HEK293 (cell line): ENCODE measurements at regions of chr17 and their contacts with region 1.

Region 1: GRCh38 chr17:45277216-45277849 is 15.4 kb upstream of the SPATA32 start:
- H3K4me3 ChIP-seq: no peak overlapping the region
- H3K27ac ChIP-seq: no peak overlapping the region
- H3K4me1 ChIP-seq: peaks cover 5% of the 10 kb centered on the region
- CTCF ChIP-seq: peak; percentile 55

Region 2: DNA sequence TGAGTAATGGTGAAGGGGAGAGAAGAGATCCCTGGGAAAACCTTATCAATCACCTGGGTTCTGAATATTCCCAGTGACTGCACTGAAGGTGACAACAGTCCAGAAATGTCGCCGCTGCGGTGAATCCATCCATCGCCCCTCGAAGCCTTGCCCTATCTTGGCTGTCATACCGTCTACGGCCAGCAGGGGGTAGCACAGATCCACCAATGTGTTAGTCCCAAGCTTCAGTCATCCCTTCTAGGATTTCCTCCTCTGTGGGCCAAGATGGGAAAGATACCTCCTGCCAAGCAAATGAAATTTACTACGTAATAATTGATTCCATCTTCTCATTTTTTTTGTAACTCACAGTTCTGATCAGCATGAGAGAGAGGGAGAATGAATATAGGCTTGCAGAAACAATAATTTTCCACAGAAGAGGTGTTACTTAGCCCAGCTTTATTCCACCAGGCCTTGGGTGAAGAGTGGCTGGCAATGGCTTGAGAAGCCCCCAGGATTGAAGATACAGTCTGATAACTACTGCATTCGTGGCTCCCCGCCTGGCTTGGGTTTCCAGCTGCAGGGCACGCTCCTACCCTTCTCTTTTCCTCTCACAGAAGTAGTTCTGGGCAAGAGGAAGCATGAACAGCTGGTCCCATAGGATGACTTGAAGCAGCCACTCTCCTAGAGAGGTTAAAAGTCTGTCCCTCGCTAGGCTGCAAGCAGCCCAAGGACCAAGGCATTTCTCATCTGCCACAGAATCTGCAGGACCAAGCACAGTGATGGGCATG is 58.3 kb before region 1 on chr17:
- CTCF ChIA-PET with region 1: interaction called, 39 read pairs
- POLR2A ChIA-PET with region 1: no interaction called
- H3K4me3 ChIP-seq: no peak overlapping the region
- H3K27ac ChIP-seq: no peak overlapping the region
- H3K4me1 ChIP-seq: no peaks in the 10 kb centered on the region; the same call in 1 of the 2 replicates
- CTCF ChIP-seq: peak; percentile 83

Region 3: DNA sequence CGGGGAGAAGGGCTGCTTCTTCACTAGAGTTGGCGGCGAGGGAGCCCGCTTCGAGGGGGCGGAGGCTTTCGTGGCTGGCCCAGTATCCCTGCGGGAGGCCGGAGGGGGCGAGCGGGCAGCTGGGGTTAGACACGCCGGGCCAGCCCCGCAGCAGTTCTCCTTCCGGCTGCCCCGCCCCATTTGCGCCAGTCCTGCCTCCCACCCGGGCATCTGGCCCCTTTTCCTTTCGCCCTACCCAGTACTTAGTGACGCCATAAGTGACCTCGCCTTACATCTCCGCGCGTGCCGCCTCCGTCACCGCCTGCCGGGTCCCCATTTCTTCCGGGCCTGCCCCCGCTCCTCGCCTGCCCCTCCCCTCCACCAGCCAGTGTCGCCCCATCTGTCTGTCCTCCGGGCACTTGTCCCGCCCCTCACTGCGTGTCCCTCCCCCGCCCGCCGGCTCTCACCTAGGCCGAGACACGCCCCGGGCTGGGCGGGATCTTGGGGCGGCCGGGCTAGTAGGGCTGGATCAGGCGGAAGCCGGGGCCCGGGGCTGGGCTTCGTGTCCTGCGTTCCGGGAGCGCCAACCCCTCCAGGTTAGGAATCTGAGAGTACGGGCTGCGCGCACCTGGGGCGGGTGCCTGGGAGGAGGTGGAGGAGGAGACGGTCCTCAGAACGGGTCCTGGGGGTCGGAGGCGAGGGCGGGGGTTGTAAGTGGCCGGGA is 29.8 kb before region 1 on chr17:
- CTCF ChIA-PET with region 1: interaction called, 10 read pairs
- POLR2A ChIA-PET with region 1: interaction called, 4 read pairs
- H3K4me3 ChIP-seq: peak overlapping the region; percentile 67
- H3K27ac ChIP-seq: peak overlapping the region; percentile 80
- H3K4me1 ChIP-seq: peaks cover 2% of the 10 kb centered on the region
- CTCF ChIP-seq: no peak; the same call in 1 of the 2 replicates

Region 4: DNA sequence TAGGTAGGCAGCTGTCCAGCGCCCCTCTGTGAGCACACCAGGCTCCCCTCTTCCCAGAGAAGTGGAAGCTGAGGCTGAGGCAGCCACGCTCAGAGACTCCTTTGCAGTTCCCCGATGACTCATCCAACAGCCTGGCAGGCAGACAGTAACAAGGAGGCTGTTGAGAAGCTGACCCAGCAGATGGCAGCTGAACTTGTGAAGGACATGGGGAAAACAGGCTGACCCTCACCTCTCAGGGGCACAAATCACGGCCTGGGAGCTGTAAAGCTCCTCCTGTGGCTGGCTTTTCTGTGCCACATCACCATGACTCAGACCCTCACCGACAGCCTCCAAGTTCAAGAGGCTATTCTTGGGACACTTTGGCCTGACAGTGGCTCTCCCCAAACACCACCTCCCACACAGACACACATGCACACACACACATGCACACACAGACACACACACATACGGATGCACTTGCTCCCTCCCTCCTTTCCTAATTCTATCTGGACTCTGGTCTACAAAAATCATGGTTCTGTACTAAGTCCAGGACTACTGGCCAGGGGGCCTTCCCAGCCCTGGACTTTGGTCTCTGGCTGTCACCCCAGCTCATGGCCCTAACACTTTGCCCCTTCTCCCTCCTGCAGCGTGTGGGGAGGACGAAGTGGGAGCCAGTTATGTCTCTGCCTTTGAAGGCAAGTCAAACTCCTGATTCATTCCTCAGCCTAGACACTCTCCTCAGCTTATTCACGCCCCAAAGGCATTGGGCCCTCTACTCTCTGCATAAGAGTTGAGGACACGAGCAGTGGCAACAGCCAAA is 16.3 kb after region 1 on chr17:
- CTCF ChIA-PET with region 1: interaction called, 38 read pairs
- POLR2A ChIA-PET with region 1: interaction called, 4 read pairs
- H3K4me3 ChIP-seq: no peak overlapping the region
- H3K27ac ChIP-seq: no peak overlapping the region
- H3K4me1 ChIP-seq: peaks cover 12% of the 10 kb centered on the region
- CTCF ChIP-seq: peak; percentile 27; the same call in 1 of the 2 replicates

Region 5: GRCh38 chr17:45317112-45317928 is 40.0 kb after region 1 on chr17:
- CTCF ChIA-PET with region 1: interaction called, 61 read pairs
- POLR2A ChIA-PET with region 1: interaction called, 17 read pairs
- H3K4me3 ChIP-seq: peak overlapping the region; percentile 23
- H3K27ac ChIP-seq: peak overlapping the region; percentile 75
- H3K4me1 ChIP-seq: peaks cover 52% of the 10 kb centered on the region
- CTCF ChIP-seq: peak; percentile 37; the same call in 1 of the 2 replicates

Region 6: DNA sequence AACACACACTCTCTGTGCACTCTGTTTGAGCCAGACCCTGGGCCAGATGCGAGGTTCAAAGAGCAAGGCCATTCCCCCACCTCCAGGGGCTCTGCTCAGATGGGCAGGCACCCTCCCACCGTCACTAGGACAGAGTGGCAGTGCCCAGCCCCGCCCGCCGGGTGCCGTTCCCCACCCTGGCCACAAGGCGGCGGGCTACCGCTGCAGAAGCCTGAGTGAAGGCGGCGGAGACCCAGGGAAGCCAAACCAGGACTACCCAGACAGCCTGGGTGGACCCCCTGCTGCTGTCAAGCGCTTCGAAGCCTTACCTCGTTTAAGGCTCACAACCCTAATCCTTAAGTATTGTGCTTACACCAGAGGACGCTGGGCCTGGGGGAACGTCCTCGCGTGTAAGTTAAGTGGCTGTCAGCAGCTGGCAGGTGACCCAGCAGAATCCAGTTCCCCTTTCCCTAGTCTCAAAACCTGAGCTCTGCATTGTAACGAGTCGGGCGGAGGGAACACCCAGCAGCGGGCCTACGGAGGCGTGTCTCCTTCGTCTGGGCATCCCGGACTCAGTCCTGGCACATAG is 150.8 kb after region 1 on chr17:
- CTCF ChIA-PET with region 1: interaction called, 14 read pairs
- POLR2A ChIA-PET with region 1: interaction called, 7 read pairs
- H3K4me3 ChIP-seq: no peak overlapping the region
- H3K27ac ChIP-seq: no peak overlapping the region
- H3K4me1 ChIP-seq: peaks cover 15% of the 10 kb centered on the region
- CTCF ChIP-seq: peak; percentile 91